Aorta (tissue), 5 donors: ENCODE measurements at regions of chr1 and their contacts with region 1.

Region 1: GRCh38 chr1:110780600-110781484 is 92.1 kb upstream of the CD53 start:
- DNase-seq: peak in 1 of 2 donors; percentile 76
- ATAC-seq: peak; percentile 68
- H3K4me3 ChIP-seq: no peak overlapping the region
- H3K27ac ChIP-seq: no peak overlapping the region
- H3K4me1 ChIP-seq: no peaks in the 10 kb centered on the region
- H3K27me3 ChIP-seq: no peaks in the 10 kb centered on the region

Region 2: GRCh38 chr1:110462964-110463363 is 317.9 kb before region 1 on chr1:
- intact Hi-C with region 1: no loop called
- DNase-seq: no peak
- ATAC-seq: no peak
- H3K4me3 ChIP-seq: no peak overlapping the region
- H3K27ac ChIP-seq: no peak overlapping the region
- H3K4me1 ChIP-seq: no peaks in the 10 kb centered on the region
- H3K27me3 ChIP-seq: no peaks in the 10 kb centered on the region

Region 3: GRCh38 chr1:110630839-110631663 is 149.8 kb before region 1 on chr1:
- intact Hi-C with region 1: loop called (anchors 5 kb)
- DNase-seq: peak; percentile 81 to 91
- ATAC-seq: peak; percentile 78
- H3K4me3 ChIP-seq: no peak overlapping the region
- H3K27ac ChIP-seq: no peak overlapping the region
- H3K4me1 ChIP-seq: no peaks in the 10 kb centered on the region
- H3K27me3 ChIP-seq: no peaks in the 10 kb centered on the region

Region 4: DNA sequence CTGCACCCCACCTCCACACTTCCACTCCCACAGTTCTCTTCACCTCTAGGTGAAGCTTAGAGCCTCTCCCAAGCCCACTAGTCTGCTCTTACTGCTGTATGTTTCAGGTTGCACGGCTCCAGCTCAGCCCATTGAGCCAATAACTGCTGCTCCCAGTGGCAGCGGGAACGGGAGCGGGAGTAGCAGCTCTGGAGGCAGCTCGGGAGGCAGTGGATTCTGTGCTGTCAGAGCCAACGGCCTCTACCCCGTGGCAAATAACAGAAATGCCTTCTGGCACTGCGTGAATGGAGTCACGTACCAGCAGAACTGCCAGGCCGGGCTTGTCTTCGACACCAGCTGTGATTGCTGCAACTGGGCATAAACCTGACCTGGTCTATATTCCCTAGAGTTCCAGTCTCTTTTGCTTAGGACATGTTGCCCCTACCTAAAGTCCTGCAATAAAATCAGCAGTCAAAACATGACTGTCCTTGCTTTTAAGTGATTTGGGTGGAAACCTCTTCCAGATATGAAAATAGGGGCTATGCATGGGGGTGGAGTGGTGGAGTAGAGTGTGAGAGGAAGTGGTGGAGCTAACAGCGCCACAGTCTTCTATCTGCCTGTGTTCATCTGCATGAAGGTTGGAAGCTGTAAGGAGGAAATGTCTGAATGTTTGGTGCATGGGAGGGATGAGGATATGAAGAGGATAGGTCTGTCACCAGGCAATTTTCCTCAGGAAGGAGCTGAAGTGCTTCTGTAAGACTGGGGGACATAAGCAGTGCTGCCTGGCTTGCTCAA is 539.5 kb after region 1 on chr1:
- intact Hi-C with region 1: no loop called
- DNase-seq: no peak
- ATAC-seq: no peak
- H3K4me3 ChIP-seq: no peak overlapping the region
- H3K27ac ChIP-seq: no peak overlapping the region
- H3K4me1 ChIP-seq: no peaks in the 10 kb centered on the region
- H3K27me3 ChIP-seq: peaks cover 0 to 2% of the 10 kb centered on the region in 2 donors